ENCODE measurements at regions of chr13 and their contacts with region 1.

Region 1: GRCh38 chr13:59391696-59392095 is 772.0 kb downstream of the DIAPH3 start:
- DNase-seq: peak; percentile 83
- H3K4me3 ChIP-seq: no peak overlapping the region
- H3K27ac ChIP-seq: no peak overlapping the region
- H3K4me1 ChIP-seq: peaks cover 4% of the 10 kb centered on the region
- CTCF ChIP-seq: peak; percentile 93

Region 2: DNA sequence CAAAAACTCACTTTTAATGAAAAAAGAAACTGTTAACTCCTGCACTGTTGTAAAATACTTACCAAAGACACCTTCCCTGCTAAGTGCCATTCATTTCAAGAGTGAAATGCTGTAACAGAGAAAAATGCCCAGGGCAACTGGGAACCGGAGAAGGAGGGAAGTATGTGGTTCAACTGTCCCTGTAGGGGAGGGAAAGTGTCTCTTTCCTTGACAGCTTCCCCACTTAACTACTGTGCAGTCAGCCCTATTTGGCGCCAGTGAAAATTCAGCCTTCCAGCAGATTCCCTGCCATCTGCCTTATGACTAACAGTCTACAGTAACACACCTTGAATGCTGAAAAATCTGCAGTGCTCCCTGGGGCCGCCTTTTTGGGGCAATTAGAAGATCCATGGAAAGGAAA is 17.0 kb before region 1 on chr13:
- CTCF ChIA-PET with region 1: no interaction called
- POLR2A ChIA-PET with region 1: no interaction called
- intact Hi-C with region 1: no loop called
- DNase-seq: no peak
- H3K4me3 ChIP-seq: no peak overlapping the region
- H3K27ac ChIP-seq: no peak overlapping the region
- H3K4me1 ChIP-seq: no peaks in the 10 kb centered on the region
- CTCF ChIP-seq: no peak

Region 3: GRCh38 chr13:60329221-60329983 is 937.7 kb after region 1 on chr13:
- CTCF ChIA-PET with region 1: no interaction called
- POLR2A ChIA-PET with region 1: no interaction called
- intact Hi-C with region 1: loop called (anchors 5 kb)
- DNase-seq: peak; percentile 27
- H3K4me3 ChIP-seq: no peak overlapping the region
- H3K27ac ChIP-seq: no peak overlapping the region
- H3K4me1 ChIP-seq: no peaks in the 10 kb centered on the region
- CTCF ChIP-seq: peak; percentile 70